Activated CD4-positive, alpha-beta T cell treated with anti-CD3 and anti-CD28 coated beads for 36 hours (primary cell): ENCODE measurements at regions of chr15 and their contacts with region 1.

Region 1: GRCh38 chr15:40344631-40345120 is 3.9 kb upstream of the CCDC9B start:
- DNase-seq: peak; percentile 85
- ATAC-seq: peak; percentile 93
- H3K4me3 Mint-ChIP-seq: no peak overlapping the region
- H3K27ac Mint-ChIP-seq: no peak overlapping the region
- H3K4me1 Mint-ChIP-seq: no peaks in the 10 kb centered on the region
- H3K27me3 Mint-ChIP-seq: no peaks in the 10 kb centered on the region

Region 2: DNA sequence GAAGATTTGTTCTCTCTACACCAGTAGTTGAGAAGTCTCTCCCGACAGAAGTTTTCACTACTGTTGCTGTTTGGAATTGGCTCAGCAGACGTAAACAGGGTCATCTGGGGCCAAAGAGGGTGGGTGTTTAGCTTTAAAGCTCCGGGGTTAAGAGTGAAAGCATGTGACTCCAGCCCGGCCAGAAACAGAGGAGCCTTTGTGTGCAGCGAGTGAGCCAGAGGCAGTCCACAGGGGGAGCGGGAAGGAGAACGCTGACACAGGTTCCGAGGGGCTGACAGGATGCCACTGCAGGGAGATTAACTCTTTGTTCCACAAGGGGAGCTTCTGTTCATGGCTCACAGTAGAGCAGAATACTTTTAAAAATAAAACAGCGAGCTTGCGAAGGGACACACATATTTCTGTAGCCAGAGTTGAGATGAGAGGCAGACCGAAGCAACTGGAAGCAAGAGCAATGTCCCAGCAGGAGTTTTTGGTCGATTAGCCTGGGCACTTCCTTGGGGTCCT is 262.9 kb before region 1 on chr15:
- CTCF ChIA-PET with region 1: no interaction called
- POLR2A ChIA-PET with region 1: no interaction called
- intact Hi-C with region 1: no loop called
- DNase-seq: peak; percentile 42
- ATAC-seq: peak; percentile 48
- H3K4me3 Mint-ChIP-seq: peak overlapping the region; percentile 23
- H3K27ac Mint-ChIP-seq: peak overlapping the region; percentile 8
- H3K4me1 Mint-ChIP-seq: peaks cover 43% of the 10 kb centered on the region
- H3K27me3 Mint-ChIP-seq: peaks cover 23% of the 10 kb centered on the region

Region 3: GRCh38 chr15:40108855-40109735 is 235.6 kb before region 1 on chr15 and contains the start of gene BMF:
- CTCF ChIA-PET with region 1: no interaction called
- POLR2A ChIA-PET with region 1: no interaction called
- intact Hi-C with region 1: no loop called
- DNase-seq: peak; percentile 98
- ATAC-seq: peak; percentile 51
- H3K4me3 Mint-ChIP-seq: peak within 1 kb of the TSS; percentile 78
- H3K27ac Mint-ChIP-seq: peak within 1 kb of the TSS; percentile 76
- H3K4me1 Mint-ChIP-seq: peaks cover 48% of the 10 kb centered on the region
- H3K27me3 Mint-ChIP-seq: peaks cover 2% of the 10 kb centered on the region
- total RNA-seq, gene BMF: 7.6 to 8.4 TPM

Region 4: GRCh38 chr15:40313531-40314398 is 30.9 kb before region 1 on chr15:
- CTCF ChIA-PET with region 1: interaction called, 150 read pairs
- POLR2A ChIA-PET with region 1: no interaction called
- intact Hi-C with region 1: no loop called
- DNase-seq: peak; percentile 64
- ATAC-seq: peak; percentile 47
- H3K4me3 Mint-ChIP-seq: no peak overlapping the region
- H3K27ac Mint-ChIP-seq: no peak overlapping the region
- H3K4me1 Mint-ChIP-seq: peaks cover 25% of the 10 kb centered on the region
- H3K27me3 Mint-ChIP-seq: peaks cover 2% of the 10 kb centered on the region

Region 5: DNA sequence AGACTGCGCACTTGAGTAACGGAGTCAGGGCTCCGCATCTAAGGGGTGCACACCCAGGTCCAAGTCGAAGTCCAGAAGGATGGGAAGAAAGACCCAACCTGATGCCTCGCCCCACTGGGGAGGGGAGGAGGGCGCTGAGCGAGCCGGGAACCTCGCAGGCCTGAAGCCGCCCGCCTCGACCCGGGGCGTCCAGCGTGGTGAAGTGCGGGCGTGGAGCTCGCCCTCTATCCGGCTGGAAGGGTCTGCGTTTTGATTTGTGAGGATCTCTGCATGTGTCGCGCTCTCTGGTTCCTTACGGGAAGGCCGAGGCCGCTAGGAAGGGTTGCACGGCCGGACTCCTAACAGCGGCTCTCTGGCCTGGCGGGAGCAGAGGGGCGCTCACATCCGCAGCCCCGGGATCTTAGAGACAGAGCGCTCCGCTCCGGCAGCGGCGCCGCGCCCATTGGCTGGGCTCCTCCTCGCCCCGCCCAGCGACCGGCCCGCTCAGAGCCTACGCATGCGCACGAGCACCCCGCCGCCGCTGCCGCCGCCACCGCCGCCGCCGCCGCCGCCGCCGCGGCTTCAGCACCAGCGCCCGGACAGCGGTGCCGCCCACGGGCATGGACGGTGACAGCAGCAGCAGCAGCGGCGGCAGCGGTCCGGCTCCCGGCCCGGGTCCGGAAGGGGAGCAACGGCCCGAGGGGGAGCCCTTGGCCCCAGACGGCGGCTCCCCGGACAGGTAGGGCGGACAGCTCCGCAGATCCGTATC is 13.2 kb after region 1 on chr15 and contains the start of gene DISP2:
- CTCF ChIA-PET with region 1: interaction called, 10 read pairs
- POLR2A ChIA-PET with region 1: no interaction called
- intact Hi-C with region 1: no loop called
- DNase-seq: peak; percentile 93
- ATAC-seq: peak; percentile 94
- H3K4me3 Mint-ChIP-seq: peak within 1 kb of the TSS; percentile 67
- H3K27ac Mint-ChIP-seq: peak within 1 kb of the TSS; percentile 20
- H3K4me1 Mint-ChIP-seq: peaks cover 3% of the 10 kb centered on the region
- H3K27me3 Mint-ChIP-seq: peaks cover 7% of the 10 kb centered on the region
- total RNA-seq, gene DISP2: 0.02 to 0.04 TPM

Region 6: DNA sequence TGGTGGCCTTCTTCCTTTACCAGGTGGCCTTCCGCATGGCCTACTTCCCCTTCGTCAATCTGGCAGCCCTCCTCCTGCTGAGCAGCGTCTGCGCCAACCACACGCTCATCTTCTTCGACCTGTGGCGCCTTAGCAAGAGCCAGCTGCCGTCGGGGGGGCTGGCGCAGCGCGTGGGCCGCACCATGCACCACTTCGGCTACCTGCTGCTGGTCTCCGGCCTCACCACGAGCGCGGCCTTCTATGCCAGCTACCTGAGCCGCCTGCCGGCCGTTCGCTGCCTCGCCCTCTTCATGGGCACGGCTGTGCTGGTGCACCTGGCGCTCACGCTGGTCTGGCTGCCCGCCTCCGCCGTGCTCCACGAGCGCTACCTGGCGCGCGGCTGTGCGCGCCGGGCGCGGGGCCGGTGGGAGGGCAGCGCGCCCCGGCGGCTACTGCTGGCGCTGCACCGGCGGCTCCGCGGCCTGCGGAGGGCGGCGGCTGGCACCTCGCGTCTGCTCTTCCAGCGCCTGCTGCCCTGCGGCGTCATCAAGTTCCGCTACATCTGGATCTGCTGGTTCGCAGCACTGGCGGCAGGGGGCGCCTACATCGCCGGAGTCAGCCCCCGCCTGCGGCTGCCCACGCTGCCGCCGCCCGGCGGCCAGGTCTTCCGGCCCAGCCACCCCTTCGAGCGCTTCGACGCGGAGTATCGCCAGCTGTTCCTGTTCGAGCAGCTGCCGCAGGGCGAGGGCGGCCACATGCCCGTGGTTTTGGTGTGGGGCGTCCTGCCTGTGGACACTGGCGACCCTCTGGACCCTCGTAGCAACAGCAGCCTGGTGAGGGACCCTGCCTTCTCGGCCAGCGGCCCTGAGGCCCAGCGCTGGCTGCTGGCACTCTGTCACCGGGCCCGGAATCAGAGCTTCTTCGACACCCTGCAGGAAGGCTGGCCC is 23.3 kb after region 1 on chr15:
- CTCF ChIA-PET with region 1: interaction called, 10 read pairs
- POLR2A ChIA-PET with region 1: no interaction called
- intact Hi-C with region 1: loop called (anchors 1 kb)
- DNase-seq: peak; percentile 94
- ATAC-seq: peak; percentile 98
- H3K4me3 Mint-ChIP-seq: peak overlapping the region; percentile 74
- H3K27ac Mint-ChIP-seq: peak overlapping the region; percentile 51
- H3K4me1 Mint-ChIP-seq: peaks cover 8% of the 10 kb centered on the region
- H3K27me3 Mint-ChIP-seq: no peaks in the 10 kb centered on the region

Region 7: GRCh38 chr15:40421246-40422157 is 76.8 kb after region 1 on chr15:
- CTCF ChIA-PET with region 1: interaction called, 151 read pairs
- POLR2A ChIA-PET with region 1: no interaction called
- intact Hi-C with region 1: loop called (anchors 1 kb)
- DNase-seq: peak; percentile 91
- ATAC-seq: peak; percentile 98
- H3K4me3 Mint-ChIP-seq: no peak overlapping the region
- H3K27ac Mint-ChIP-seq: no peak overlapping the region
- H3K4me1 Mint-ChIP-seq: no peaks in the 10 kb centered on the region
- H3K27me3 Mint-ChIP-seq: no peaks in the 10 kb centered on the region

Region 8: DNA sequence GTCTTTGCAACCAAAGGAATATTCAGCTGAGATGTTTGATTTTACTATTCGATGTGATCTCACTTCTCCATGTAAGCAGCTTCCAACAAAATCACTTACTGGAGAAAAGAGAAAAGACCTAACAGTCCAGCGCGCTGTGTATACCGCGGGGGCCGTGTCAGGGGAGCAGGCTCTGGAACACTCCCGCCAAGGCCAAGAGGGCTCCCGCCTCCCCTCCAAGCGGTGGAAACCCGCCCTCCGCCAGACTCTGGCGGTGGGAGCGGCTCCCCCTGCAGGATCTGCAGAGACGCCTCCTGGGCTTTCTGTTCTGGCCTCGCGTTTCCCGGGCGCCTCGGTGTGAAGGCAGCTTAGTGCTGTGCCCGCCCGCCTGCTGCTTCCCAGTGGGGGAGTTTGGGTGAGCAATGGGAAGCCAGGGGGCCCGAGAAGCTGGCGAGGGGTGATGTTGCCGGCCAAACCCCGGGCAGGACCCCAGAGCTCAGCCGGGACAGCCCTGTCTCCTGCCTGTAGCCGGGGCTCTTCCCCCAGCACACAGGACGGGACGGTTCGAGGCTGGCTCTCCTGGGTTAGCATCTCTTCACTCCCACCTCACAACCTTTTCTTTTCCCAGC is 162.4 kb after region 1 on chr15:
- CTCF ChIA-PET with region 1: interaction called, 4 read pairs
- POLR2A ChIA-PET with region 1: no interaction called
- intact Hi-C with region 1: loop called in 1 of 2 experiments (anchors 5 kb)
- DNase-seq: peak; percentile 82
- ATAC-seq: peak; percentile 86
- H3K4me3 Mint-ChIP-seq: peak overlapping the region; percentile 6
- H3K27ac Mint-ChIP-seq: no peak overlapping the region
- H3K4me1 Mint-ChIP-seq: peaks cover 16% of the 10 kb centered on the region
- H3K27me3 Mint-ChIP-seq: peaks cover 50% of the 10 kb centered on the region